Gastrocnemius medialis (tissue), 4 donors: ENCODE measurements at regions of chr7 and their contacts with region 1.

Region 1: GRCh38 chr7:120554960-120555571 is 282.1 kb downstream of the KCND2 start:
- DNase-seq: no peak
- ATAC-seq: no peak
- H3K4me3 ChIP-seq: no peak overlapping the region
- H3K27ac ChIP-seq: no peak overlapping the region
- H3K4me1 ChIP-seq: no peaks in the 10 kb centered on the region
- H3K27me3 ChIP-seq: no peaks in the 10 kb centered on the region
- CTCF ChIP-seq: peak in 3 of 5 experiments; percentile 23 to 47 (median 33)
- POLR2A ChIP-seq: no peak

Region 2: DNA sequence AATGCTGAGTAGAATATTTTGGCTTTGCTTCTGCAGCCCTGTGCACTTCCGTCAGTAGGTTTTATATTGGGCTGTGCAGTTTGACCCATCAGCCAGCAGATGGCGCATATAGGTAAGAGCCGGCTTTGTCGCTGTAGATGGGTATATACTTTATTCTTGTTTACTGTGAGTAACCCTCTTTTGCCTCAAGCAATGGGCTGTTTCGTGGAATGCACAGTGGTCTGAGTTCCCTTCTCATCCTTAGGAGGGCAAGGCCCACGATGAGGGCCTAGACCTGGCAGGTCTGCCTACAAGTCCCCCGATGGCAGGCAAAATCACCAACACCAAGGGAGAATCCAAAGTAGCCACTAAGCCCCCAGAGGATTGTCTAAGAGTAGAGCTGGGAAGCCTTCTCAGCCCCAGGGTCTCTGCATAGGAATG is 1285.0 kb before region 1 on chr7:
- in situ Hi-C with region 1: loop called in 2 of 4 experiments (anchors 10 to 25 kb)
- intact Hi-C with region 1: no loop called
- DNase-seq: peak; percentile 5 to 14
- ATAC-seq: no peak
- H3K4me3 ChIP-seq: no peak overlapping the region
- H3K27ac ChIP-seq: no peak overlapping the region
- H3K4me1 ChIP-seq: no peaks in the 10 kb centered on the region
- H3K27me3 ChIP-seq: no peaks in the 10 kb centered on the region
- CTCF ChIP-seq: peak in 4 of 5 experiments; percentile 31 to 55 (median 43)
- POLR2A ChIP-seq: no peak